Cardiac septum (tissue), 1 donor: ENCODE measurements at regions of chr9 and their contacts with region 1.

Region 1: GRCh38 chr9:130860458-130861316 is 25.6 kb downstream of the ABL1 start:
- DNase-seq: peak; percentile 92

Region 2: DNA sequence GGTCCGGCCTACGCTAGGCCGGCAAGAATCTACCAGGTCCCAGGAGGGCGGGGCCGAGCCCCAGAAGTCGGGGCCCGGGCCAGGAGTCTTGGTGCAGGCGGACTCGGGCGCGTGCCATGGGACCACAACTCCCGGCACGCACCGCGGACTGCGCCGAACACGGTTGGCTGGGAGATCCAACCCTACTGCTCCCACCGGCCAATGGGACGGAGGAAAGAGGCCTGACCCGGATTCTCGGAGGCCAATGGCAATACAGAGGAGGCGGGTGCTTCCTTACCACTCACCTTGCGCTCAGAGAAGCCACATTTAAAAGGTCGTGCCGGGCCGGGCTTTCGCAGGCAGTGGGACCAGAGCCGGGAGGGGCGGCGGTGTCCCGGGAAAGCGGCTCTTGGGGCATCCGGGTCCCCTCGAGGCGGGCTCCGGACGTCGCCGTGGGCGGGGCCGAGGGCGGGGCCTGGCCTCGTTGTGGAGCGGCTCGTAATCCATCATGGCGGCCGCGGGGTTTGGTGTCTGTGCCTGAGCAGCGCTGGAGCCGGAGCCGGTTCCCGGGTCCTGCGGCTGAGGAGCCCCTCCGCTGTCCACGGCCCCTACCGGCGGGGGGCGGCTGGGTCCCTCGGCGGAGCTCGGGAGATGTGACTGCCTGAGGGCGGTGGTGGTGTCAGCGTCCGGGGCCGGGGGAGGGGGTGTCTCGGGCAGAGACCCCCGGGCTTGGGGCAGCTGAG is 148.0 kb before region 1 on chr9:
- intact Hi-C with region 1: loop called (anchors 2 kb)
- DNase-seq: peak; percentile 99

Region 3: GRCh38 chr9:130770679-130771442 is 89.8 kb before region 1 on chr9:
- intact Hi-C with region 1: loop called (anchors 2 kb)
- DNase-seq: no peak

Region 4: DNA sequence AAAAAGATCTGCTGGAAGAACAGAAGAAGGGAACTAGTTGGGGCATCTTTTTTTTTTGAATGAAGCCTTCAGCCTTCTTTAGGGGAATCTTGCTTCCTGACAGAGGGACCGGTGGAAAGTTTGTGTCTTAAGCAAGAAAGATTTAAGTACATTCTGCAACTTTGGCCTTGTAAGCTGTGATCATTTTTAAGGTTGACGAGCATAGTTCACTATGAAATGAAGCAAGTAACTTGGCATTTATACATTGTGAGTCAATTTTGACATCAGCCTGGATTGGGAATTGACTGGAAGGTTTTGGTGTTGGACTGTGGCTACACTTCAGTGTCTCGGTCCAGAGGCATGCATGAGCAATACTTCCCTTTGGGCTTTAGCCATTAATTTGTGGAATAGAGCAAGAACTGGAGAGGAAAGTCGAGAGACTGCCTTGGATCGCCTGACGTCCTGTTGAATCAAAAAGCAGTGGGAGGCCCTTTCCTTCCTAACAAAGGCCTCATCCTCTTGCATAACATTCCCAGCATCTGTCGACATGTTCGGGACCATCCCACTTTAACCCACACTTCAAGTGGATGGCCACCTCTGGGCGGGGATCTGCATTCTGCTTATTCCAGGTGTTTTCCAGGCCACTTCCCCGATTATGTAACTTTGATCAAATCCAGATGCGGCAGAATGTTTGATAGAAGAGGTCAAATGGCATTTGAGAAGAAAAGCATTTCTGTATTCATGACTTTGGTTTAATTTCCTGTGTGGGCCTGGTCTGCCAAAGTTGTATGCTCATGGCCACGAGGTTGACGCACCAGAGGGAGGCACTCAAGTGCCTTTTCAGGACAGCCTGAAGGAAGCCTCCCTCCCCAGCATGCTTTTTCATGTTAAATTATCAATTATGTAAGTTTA is 13.1 kb before region 1 on chr9:
- intact Hi-C with region 1: loop called (anchors 2 kb)
- DNase-seq: peak; percentile 81